Gastrocnemius medialis (tissue), 4 donors: ENCODE measurements at regions of chr12 and their contacts with region 1.

Region 1: GRCh38 chr12:6752921-6753771 is at the start of gene MLF2:
- DNase-seq: peak; percentile 98 to 99
- ATAC-seq: peak; percentile 95 to 97
- H3K4me3 ChIP-seq: peak within 1 kb of the TSS; percentile 67 to 95 (median 92)
- H3K27ac ChIP-seq: peak within 1 kb of the TSS; percentile 89 to 100 (median 98)
- H3K4me1 ChIP-seq: peaks cover 10 to 12% of the 10 kb centered on the region in 2 donors
- H3K27me3 ChIP-seq: no peaks in the 10 kb centered on the region
- CTCF ChIP-seq: peak in 1 of 5 experiments; percentile 98
- POLR2A ChIP-seq: peak; percentile 93 to 94
- total RNA-seq, gene MLF2: 105 to 181 (median 165) TPM

Region 2: GRCh38 chr12:6554168-6555017 is 198.8 kb before region 1 on chr12:
- in situ Hi-C with region 1: no loop called
- intact Hi-C with region 1: no loop called
- DNase-seq: peak; percentile 64 to 87
- ATAC-seq: peak; percentile 26 to 29
- H3K4me3 ChIP-seq: peak overlapping the region; percentile 67 to 88 (median 77)
- H3K27ac ChIP-seq: peak overlapping the region; percentile 90 to 99 (median 92)
- H3K4me1 ChIP-seq: peaks cover 66% of the 10 kb centered on the region in 2 donors
- H3K27me3 ChIP-seq: no peaks in the 10 kb centered on the region
- CTCF ChIP-seq: peak in 4 of 5 experiments; percentile 64 to 70 (median 68)
- POLR2A ChIP-seq: no peak

Region 3: GRCh38 chr12:6662906-6663742 is 90.0 kb before region 1 on chr12 and contains the start of gene ING4:
- in situ Hi-C with region 1: no loop called
- intact Hi-C with region 1: no loop called
- DNase-seq: peak; percentile 97 to 99
- ATAC-seq: peak; percentile 100
- H3K4me3 ChIP-seq: peak within 1 kb of the TSS; percentile 66 to 97 (median 81)
- H3K27ac ChIP-seq: peak within 1 kb of the TSS; percentile 78 to 84 (median 80)
- H3K4me1 ChIP-seq: peaks cover 12 to 18% of the 10 kb centered on the region in 2 donors
- H3K27me3 ChIP-seq: no peaks in the 10 kb centered on the region
- CTCF ChIP-seq: no peak
- POLR2A ChIP-seq: no peak
- total RNA-seq, gene ING4: 12.8 to 28.9 (median 19.7) TPM

Region 4: DNA sequence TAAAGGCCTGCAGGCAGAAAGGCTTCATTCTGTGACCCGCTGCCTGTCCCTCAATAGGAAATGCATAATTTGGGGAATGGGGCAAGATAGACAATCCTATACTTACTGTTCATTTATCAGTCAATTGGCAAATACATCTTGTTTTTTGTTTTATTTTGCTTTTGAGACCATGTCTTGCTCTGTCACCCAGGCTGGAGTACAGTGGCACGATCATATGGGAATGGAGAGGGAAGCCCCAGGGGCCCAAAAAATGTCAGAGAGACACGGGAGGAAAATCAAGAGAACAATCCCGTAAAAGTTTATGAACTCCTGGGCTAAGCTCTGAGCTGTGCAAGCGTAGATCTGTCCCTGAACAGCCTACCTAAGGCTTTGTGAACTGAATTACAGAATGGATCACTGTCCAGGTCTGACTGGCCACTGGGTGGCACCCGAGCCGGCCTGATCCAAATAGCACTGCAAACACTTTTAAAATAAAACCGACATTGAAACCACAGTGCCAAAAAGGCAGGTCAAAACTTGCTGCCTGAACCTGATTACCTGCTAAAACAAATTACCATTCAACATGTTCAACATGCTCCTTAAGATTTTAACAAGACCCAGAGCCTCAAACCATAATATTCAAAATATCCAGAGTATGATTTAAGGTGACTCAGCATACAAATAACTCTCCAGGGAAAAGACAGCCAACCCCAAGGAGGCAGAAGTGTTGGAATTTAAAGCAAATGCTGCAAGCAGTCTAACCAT is 17.5 kb before region 1 on chr12:
- in situ Hi-C with region 1: no loop called
- intact Hi-C with region 1: loop called (anchors 1 kb)
- DNase-seq: peak; percentile 43 to 72
- ATAC-seq: peak; percentile 94 to 95
- H3K4me3 ChIP-seq: no peak overlapping the region
- H3K27ac ChIP-seq: peak overlapping the region; percentile 66 to 76 (median 72)
- H3K4me1 ChIP-seq: peaks cover 0 to 9% of the 10 kb centered on the region in 2 donors
- H3K27me3 ChIP-seq: no peaks in the 10 kb centered on the region
- CTCF ChIP-seq: peak; percentile 59 to 78 (median 70)
- POLR2A ChIP-seq: no peak

Region 5: GRCh38 chr12:6778574-6779550 is 25.7 kb after region 1 on chr12:
- in situ Hi-C with region 1: no loop called
- intact Hi-C with region 1: loop called (anchors 1 kb)
- DNase-seq: peak; percentile 91 to 93
- ATAC-seq: peak; percentile 95 to 99
- H3K4me3 ChIP-seq: peak overlapping the region; percentile 37 to 65 (median 54)
- H3K27ac ChIP-seq: peak overlapping the region; percentile 59 to 73 (median 68)
- H3K4me1 ChIP-seq: peaks cover 9 to 10% of the 10 kb centered on the region in 2 donors
- H3K27me3 ChIP-seq: no peaks in the 10 kb centered on the region
- CTCF ChIP-seq: peak; percentile 96 to 98 (median 97)
- POLR2A ChIP-seq: no peak

Region 6: GRCh38 chr12:6851921-6852650 is 98.9 kb after region 1 on chr12 and contains the start of gene USP5:
- in situ Hi-C with region 1: no loop called
- intact Hi-C with region 1: loop called (anchors 1 kb)
- DNase-seq: peak; percentile 99
- ATAC-seq: peak; percentile 85 to 88
- H3K4me3 ChIP-seq: peak within 1 kb of the TSS; percentile 68 to 83 (median 74)
- H3K27ac ChIP-seq: peak within 1 kb of the TSS; percentile 86 to 97 (median 92)
- H3K4me1 ChIP-seq: peaks cover 13 to 17% of the 10 kb centered on the region in 2 donors
- H3K27me3 ChIP-seq: no peaks in the 10 kb centered on the region
- CTCF ChIP-seq: peak in 2 of 5 experiments; percentile 13 to 23
- POLR2A ChIP-seq: peak in 1 of 2 donors; percentile 64
- total RNA-seq, gene USP5: 66.4 to 120 (median 74.1) TPM